Heart right ventricle (tissue), 16 donors: ENCODE measurements at regions of chr10 and their contacts with region 1.

Region 1: DNA sequence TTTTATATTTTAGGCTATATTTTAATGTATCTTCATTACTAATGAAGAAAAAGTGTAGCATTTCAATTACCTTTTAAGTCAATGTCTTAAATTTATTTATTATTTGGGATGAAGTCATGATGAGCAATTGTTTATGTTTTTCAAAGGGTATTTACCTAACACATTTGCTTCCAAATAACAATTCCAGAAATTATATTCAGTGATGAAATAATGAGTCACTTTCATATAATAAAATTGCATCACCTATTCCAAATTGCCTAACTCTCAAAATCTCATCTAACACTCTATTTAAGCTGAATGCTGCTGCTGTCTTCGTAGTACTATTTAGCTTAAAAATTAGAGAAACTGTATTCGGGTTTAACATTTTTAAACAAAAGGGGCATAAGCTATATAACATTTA is 97.7 kb downstream of the PRKG1 start:
- DNase-seq: no peak
- ATAC-seq: no peak
- H3K4me3 ChIP-seq: no peak overlapping the region
- H3K27ac ChIP-seq: no peak overlapping the region
- H3K4me1 ChIP-seq: peaks cover 0 to 5% (median 0%) of the 10 kb centered on the region in 9 donors
- H3K27me3 ChIP-seq: no peaks in the 10 kb centered on the region
- CTCF ChIP-seq: no peak

Region 2: DNA sequence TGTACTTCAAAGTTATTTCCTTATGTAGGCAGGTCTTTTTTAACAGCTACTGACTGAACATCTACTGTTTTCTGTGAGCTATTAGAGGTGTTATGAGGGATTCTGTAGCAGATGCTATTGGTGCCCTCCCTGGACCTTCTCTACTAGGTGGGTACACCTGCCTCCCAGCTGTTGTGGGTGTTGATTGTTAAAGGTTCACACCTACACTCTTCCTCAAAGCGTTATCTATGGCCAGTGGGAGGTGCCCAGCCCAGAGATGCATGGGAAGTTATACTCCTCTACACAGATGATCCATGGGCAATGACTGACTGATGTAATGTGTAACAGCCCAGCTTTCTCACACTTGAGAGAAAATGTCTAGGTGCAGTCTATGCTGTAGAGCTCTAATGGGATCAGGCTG is 30.0 kb after region 1 on chr10:
- intact Hi-C with region 1: loop called in 1 of 10 experiments (anchors 1 kb)
- DNase-seq: no peak
- ATAC-seq: no peak
- H3K4me3 ChIP-seq: no peak overlapping the region
- H3K27ac ChIP-seq: no peak overlapping the region
- H3K4me1 ChIP-seq: peaks cover 0 to 6% (median 0%) of the 10 kb centered on the region in 9 donors
- H3K27me3 ChIP-seq: no peaks in the 10 kb centered on the region
- CTCF ChIP-seq: no peak

Region 3: GRCh38 chr10:51257511-51258248 is 85.7 kb after region 1 on chr10:
- intact Hi-C with region 1: no loop called
- DNase-seq: no peak
- ATAC-seq: peak in 1 of 8 donors; percentile 16
- H3K4me3 ChIP-seq: no peak overlapping the region
- H3K27ac ChIP-seq: no peak overlapping the region
- H3K4me1 ChIP-seq: peaks cover 0 to 7% (median 0%) of the 10 kb centered on the region in 9 donors
- H3K27me3 ChIP-seq: no peaks in the 10 kb centered on the region
- CTCF ChIP-seq: no peak